Gastrocnemius medialis (tissue), 4 donors: ENCODE measurements at regions of chr18 and their contacts with region 1.

Region 1: DNA sequence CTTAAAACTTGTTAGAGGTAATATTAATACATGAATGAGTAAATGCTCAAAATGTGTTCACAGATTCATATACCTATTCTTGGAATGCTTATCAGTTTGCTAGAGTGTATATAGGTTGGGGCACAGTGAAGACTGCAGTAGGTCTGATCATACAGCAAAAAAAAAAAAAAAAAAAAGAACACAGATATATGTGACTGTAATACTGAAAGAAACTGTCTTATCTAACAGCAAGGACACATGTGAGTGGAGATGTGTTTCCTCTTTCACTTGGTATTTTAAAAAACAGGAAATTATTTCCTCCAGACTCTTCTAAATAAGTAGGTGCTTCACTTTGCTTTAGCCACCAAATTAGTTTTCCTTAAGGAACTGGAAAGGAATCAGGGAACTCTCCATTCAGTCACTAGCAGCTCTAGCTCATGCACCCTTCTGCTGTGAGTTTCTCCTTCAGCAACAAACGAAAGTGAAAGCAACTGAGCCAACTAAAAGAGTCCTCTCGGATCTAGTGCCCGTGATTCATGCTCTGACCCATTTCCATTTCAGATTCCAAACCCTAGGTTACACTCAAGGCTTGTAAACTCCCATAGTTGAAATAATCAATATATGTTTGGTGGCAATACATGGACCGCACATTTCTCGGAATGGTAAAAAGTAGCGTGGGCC is 98.5 kb downstream of the DSEL start:
- DNase-seq: no peak
- ATAC-seq: peak in 1 of 2 donors; percentile 60
- H3K4me3 ChIP-seq: peak overlapping the region in 1 of 4 donors; percentile 17
- H3K27ac ChIP-seq: no peak overlapping the region
- H3K4me1 ChIP-seq: no peaks in the 10 kb centered on the region
- H3K27me3 ChIP-seq: no peaks in the 10 kb centered on the region
- CTCF ChIP-seq: no peak
- POLR2A ChIP-seq: no peak

Region 2: DNA sequence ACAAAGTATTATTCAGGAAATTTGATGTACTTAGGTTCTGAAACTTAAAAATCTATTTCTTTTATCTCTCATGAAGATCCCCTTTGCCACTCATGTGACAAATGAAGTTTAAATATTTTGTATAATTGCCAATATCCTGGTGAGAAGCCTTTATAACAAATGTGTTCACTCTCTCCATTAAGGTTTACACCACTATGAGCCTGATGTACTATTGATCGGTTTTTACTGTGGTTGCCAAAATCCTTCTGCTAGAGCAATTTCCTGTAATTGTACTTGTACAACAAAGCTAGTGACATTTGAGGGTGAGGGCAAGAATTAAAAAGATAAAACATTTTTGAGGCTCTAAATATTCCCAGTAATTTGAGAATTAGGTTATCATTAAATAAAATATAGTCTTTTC is 591.8 kb before region 1 on chr18:
- in situ Hi-C with region 1: no loop called
- intact Hi-C with region 1: no loop called
- DNase-seq: no peak
- ATAC-seq: no peak
- H3K4me3 ChIP-seq: no peak overlapping the region
- H3K27ac ChIP-seq: no peak overlapping the region
- H3K4me1 ChIP-seq: no peaks in the 10 kb centered on the region
- H3K27me3 ChIP-seq: no peaks in the 10 kb centered on the region
- CTCF ChIP-seq: no peak
- POLR2A ChIP-seq: no peak

Region 3: DNA sequence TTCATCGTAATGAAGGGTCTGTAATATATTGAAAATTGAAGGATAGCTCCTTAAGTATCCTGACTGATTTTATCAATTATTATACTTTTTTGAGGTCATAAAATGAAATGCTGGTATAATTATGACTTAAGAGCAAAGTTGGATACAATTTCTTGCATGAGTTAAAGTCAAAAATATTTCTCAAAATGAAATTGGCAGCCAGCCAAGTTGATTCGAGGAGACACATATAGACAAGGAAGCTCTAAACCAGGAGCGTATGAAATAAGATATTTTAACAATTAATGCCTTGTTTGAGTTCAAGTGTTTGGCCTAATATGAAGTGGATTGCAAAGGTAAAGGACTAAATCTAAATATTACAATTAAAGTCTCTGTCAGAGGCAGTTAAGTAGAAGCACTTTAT is 358.9 kb after region 1 on chr18:
- in situ Hi-C with region 1: no loop called
- intact Hi-C with region 1: no loop called
- DNase-seq: no peak
- ATAC-seq: no peak
- H3K4me3 ChIP-seq: no peak overlapping the region
- H3K27ac ChIP-seq: no peak overlapping the region
- H3K4me1 ChIP-seq: no peaks in the 10 kb centered on the region
- H3K27me3 ChIP-seq: no peaks in the 10 kb centered on the region
- CTCF ChIP-seq: no peak
- POLR2A ChIP-seq: no peak

Region 4: DNA sequence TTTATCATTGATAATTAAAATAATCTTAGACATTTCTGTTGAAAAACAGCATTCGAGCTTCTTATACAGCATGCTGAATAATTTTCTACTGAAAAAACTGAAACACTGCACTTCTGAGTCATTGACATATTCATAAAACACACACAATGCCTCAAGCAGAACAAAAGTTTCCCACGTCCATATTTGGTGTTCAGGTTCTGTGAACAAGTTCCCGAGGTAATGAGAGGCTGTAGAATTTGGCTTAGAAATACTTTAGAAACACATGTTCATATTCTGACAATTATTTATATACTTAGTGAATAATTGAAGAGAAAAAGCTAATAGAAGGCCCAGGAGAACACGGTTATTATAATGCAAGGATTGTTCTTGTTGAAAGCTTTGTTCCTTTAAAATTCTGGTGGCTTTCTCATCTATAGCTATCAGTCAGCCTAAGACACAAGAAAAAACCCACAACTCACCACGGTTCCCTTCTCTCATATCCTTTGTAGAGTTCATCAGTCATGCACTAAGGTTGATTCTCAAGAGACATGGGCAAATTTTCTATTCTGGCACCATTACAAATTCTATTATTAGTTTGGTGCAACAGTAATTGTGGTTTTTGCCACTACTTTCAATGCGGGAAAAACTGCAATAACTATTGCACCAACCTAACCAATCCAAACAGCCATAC is 1102.5 kb after region 1 on chr18:
- in situ Hi-C with region 1: no loop called
- intact Hi-C with region 1: loop called (anchors 10 kb)
- DNase-seq: no peak
- ATAC-seq: no peak
- H3K4me3 ChIP-seq: no peak overlapping the region
- H3K27ac ChIP-seq: no peak overlapping the region
- H3K4me1 ChIP-seq: no peaks in the 10 kb centered on the region
- H3K27me3 ChIP-seq: no peaks in the 10 kb centered on the region
- CTCF ChIP-seq: no peak
- POLR2A ChIP-seq: no peak

Region 5: GRCh38 chr18:68763083-68763482 is 1345.1 kb after region 1 on chr18:
- in situ Hi-C with region 1: loop called in 1 of 4 experiments (anchors 25 kb)
- intact Hi-C with region 1: no loop called
- DNase-seq: no peak
- ATAC-seq: no peak
- H3K4me3 ChIP-seq: no peak overlapping the region
- H3K27ac ChIP-seq: no peak overlapping the region
- H3K4me1 ChIP-seq: no peaks in the 10 kb centered on the region
- H3K27me3 ChIP-seq: no peaks in the 10 kb centered on the region
- CTCF ChIP-seq: no peak
- POLR2A ChIP-seq: no peak